Gastrocnemius medialis (tissue), 4 donors: ENCODE measurements at regions of chr3 and their contacts with region 1.

Region 1: DNA sequence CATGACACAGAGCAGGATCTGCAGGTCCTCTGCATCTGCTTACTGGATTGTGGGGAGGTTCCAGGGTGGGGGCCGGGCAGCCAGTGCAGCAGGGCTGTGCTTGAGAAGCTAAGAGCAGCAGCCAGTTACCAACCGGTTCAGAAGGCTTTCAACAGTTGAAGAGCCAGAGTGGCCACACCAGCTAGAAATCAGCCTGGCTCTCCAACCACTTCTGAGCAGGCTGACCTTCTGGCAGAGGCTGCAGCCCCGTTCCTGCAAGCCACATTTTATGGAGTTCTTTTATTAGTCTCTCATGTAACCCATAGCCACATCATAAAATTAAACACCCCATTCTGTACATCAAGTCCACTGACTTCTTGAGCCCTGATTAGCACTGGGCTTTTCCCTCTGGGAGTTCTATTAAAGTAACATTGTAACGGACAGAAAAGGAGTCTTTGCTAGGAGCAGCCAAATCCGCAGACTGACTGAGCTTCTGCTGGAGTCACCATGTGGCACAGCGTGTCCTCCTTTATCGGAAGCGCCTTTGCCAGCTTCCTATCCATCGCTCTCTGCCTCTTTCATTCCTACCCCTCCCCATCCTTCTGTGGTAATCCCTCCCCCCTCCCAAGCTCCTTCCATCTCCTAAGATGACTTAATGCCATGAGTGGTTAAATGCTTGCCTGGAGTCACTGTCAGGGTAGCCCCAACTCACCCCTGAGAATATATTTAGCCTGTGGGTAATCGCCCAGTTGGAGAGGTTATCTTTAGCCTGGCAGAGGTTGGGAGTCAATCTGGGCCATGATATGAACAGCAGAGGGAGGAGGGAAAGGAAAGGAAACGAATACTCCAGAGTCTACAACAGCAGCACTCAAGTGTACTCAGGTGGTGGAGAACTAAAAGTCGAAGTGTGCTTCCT is 138.5 kb upstream of the HES1 start:
- DNase-seq: peak; percentile 65 to 84
- ATAC-seq: peak; percentile 87
- H3K4me3 ChIP-seq: no peak overlapping the region
- H3K27ac ChIP-seq: peak overlapping the region; percentile 85 to 90 (median 86)
- H3K4me1 ChIP-seq: peaks cover 39 to 46% of the 10 kb centered on the region in 2 donors
- H3K27me3 ChIP-seq: no peaks in the 10 kb centered on the region
- CTCF ChIP-seq: no peak
- POLR2A ChIP-seq: no peak

Region 2: GRCh38 chr3:194255252-194256039 is 258.0 kb after region 1 on chr3:
- in situ Hi-C with region 1: no loop called
- intact Hi-C with region 1: no loop called
- DNase-seq: peak; percentile 41 to 48
- ATAC-seq: peak; percentile 50 to 71
- H3K4me3 ChIP-seq: no peak overlapping the region
- H3K27ac ChIP-seq: peak overlapping the region in 3 of 4 donors; percentile 29 to 50 (median 31)
- H3K4me1 ChIP-seq: peaks cover 8 to 9% of the 10 kb centered on the region in 2 donors
- H3K27me3 ChIP-seq: no peaks in the 10 kb centered on the region
- CTCF ChIP-seq: no peak
- POLR2A ChIP-seq: peak in 1 of 2 donors; percentile 22

Region 3: DNA sequence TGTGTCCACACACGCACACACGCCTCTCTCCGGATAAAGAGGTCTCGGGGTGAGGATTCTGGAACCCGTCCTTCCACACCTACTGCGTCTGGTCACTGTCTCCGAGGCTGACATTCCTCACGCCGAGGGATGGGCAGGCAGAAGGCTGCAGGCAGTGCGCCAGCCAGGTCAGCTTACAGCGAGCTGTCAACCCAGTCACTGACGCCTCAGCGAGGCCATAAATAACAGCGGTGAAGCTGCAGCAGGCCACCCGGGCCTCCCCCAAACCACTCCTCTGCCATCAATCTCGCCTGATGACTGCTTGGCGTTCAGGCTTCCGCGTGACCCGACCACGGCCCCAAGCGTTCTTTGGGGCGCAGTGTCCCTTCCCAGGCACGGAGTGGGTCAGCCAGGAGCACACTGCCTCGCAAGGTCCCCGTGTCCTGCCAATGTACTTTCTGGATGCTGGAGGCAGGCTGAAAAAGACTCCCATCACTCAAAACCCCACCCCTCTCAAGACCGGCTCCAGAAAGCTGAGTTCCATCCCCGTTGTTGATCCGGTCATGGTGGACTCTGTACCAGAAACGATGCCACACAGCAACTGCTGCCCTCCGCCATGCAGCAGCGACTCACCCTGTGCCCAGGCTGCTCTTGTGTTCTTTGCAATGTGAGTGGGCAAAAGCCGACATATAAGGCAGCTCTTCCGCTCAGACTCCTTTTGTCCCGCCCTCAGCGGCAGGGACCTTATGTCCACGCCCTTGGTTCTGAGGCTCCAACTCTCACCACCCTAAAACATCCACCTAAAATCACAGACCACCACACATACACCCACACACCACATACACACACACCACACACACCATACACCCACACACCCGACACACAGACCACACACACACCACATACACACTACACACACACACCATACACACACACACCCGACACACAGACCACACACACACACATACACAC is 326.6 kb after region 1 on chr3:
- in situ Hi-C with region 1: no loop called
- intact Hi-C with region 1: loop called (anchors 5 kb)
- DNase-seq: peak; percentile 89 to 94
- ATAC-seq: peak; percentile 86 to 89
- H3K4me3 ChIP-seq: peak overlapping the region; percentile 33 to 51 (median 48)
- H3K27ac ChIP-seq: peak overlapping the region; percentile 85 to 92 (median 88)
- H3K4me1 ChIP-seq: peaks cover 7 to 10% of the 10 kb centered on the region in 2 donors
- H3K27me3 ChIP-seq: peaks cover 0 to 10% (median 0%) of the 10 kb centered on the region in 3 donors
- CTCF ChIP-seq: no peak
- POLR2A ChIP-seq: peak; percentile 24 to 33